ENCODE measurements at regions of chr6 and their contacts with region 1.

Region 1: GRCh38 chr6:3848925-3849605 is at the start of gene FAM50B:
- DNase-seq: peak; percentile 51
- H3K4me3 ChIP-seq: peak within 1 kb of the TSS; percentile 46
- H3K27me3 ChIP-seq: no peaks in the 10 kb centered on the region
- CTCF ChIP-seq: peak; percentile 95
- polyA plus RNA-seq, gene FAM50B: 9.0 and 9.9 TPM in 2 replicates

Region 2: DNA sequence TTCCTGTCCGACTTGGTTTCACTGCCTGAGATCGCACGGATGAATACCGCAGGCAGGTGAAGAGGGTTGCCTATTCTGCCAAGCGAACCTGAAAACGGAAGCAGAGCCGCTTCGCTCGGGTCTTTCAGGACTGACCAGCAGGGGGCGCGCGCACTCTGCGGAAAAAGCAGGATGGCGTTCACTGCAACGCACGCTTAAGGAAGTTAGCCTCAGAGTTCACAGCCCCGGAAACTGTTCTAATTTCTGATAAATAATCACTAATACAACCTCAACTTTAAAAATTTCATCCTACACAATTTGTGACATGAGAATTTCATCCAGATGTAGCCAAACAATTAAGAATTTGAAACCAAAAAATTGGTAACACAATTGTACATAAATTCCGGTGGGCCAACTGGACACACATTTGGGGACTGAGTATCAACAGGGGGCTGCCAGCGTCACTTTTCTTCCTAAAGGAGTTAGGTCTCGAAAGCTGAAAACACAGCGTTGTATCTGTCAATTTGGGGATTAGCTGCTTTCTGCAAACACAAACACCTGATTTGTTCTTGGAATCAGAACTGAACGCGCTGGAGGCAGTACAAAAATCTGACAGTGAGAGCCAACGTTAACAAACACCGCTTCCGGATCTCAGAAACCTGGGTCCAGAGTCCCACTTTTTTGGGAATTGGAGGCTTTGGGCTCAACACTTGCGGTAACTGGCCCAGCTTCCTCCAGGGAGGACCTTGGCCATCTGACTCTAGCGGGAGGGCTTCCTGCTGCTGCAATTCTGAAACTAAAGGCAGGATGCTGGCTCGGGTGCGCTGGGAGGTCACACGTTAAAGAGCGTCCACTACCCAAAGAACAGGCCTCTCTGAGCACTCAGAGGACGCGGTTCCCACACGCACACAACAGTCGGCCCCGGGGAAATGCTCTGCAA is 106.4 kb before region 1 on chr6:
- CTCF ChIA-PET with region 1: interaction called, 40 read pairs
- POLR2A ChIA-PET with region 1: interaction called, 3 read pairs
- DNase-seq: no peak
- H3K4me3 ChIP-seq: no peak overlapping the region
- H3K27me3 ChIP-seq: no peaks in the 10 kb centered on the region
- CTCF ChIP-seq: peak; percentile 90

Region 3: DNA sequence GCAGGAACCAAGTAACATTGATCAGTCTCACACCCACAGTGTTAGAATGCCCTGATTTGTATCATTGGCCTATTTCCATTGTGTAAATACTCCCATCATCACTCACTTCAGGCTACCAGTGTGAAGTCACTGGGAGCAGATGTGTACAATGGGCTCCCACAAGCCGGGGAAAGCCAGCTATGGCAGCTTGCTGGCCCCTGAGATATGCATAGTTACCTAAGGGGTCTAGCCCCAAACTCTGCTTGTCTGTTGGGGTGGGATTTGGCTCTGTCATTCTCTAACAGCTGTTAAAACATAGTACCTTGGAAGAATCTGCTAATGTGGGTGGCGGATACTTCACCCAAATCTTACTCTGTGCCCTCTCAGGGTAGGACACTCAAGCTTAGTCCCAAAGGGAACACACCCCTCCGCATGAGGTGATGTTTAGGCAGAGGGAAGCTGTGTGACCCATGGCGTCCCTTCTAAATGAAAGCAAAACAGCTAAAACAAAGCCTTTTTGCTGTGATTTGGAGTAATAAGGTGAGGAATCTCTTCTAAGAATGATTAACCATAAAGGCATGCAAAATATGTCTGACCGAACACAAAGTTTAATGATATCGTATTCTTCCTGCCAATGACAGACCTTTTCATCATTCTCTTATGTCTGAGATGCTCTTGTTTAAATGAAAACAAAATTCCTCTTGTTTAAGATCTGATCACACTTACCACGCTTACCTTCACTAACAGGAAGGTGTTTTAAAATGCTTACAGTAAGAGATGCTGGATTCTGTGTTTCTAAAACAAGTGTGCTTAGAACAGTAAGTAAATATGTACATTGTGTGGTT is 51.6 kb before region 1 on chr6:
- CTCF ChIA-PET with region 1: interaction called, 13 read pairs
- POLR2A ChIA-PET with region 1: no interaction called
- DNase-seq: peak; percentile 73
- H3K4me3 ChIP-seq: no peak overlapping the region
- H3K27me3 ChIP-seq: no peaks in the 10 kb centered on the region; the same call in 1 of the 2 replicates
- CTCF ChIP-seq: no peak

Region 4: DNA sequence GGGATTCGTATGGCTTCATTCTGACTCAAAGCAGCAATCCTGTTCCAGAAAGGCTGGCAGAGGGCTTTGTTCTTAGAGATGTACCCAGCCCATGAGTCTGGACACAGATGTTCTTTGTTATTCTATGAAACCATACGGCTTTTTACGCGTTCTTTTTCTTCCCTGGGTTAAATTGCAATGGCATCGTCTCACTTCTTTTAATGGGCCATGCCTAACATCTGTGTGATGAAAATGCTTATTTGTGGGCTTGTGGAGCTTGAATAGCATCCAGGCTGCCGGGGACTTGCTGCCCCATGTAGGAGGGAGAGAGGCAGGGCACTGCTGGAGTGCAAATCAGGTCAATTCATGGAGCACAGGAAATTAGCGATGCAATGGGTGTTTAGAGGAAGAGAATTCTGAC is 19.5 kb after region 1 on chr6:
- CTCF ChIA-PET with region 1: interaction called, 12 read pairs
- POLR2A ChIA-PET with region 1: no interaction called
- DNase-seq: no peak
- H3K4me3 ChIP-seq: no peak overlapping the region
- H3K27me3 ChIP-seq: no peaks in the 10 kb centered on the region
- CTCF ChIP-seq: 0 out of 2 replicates have a peak, but pooled peaks have one; percentile 14

Region 5: DNA sequence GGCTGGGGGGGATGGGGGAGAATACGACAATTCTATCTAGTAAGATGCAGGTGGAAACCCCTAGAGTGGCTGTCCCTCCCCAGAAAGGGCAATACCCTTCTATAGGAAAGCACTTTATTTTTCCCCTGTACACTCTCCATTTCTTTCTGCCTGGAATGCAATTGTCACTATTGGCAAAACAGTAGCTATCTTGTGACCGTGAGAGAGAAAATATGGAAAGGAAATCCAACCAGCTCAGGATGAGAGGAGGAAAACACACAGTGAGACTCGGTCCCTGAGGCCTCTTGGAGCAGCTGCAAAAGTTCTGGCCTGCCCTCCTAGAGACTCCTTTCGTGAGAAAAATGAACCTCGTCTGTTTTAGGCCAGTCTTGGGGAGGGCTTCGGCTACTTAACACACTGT is 43.5 kb after region 1 on chr6:
- CTCF ChIA-PET with region 1: interaction called, 39 read pairs
- POLR2A ChIA-PET with region 1: no interaction called
- DNase-seq: no peak
- H3K4me3 ChIP-seq: no peak overlapping the region
- H3K27me3 ChIP-seq: no peaks in the 10 kb centered on the region
- CTCF ChIP-seq: no peak

Region 6: GRCh38 chr6:3929281-3929798 is 80.3 kb after region 1 on chr6:
- CTCF ChIA-PET with region 1: interaction called, 57 read pairs
- POLR2A ChIA-PET with region 1: no interaction called
- DNase-seq: peak; percentile 97
- H3K4me3 ChIP-seq: no peak overlapping the region
- H3K27me3 ChIP-seq: no peaks in the 10 kb centered on the region
- CTCF ChIP-seq: no peak

Region 7: DNA sequence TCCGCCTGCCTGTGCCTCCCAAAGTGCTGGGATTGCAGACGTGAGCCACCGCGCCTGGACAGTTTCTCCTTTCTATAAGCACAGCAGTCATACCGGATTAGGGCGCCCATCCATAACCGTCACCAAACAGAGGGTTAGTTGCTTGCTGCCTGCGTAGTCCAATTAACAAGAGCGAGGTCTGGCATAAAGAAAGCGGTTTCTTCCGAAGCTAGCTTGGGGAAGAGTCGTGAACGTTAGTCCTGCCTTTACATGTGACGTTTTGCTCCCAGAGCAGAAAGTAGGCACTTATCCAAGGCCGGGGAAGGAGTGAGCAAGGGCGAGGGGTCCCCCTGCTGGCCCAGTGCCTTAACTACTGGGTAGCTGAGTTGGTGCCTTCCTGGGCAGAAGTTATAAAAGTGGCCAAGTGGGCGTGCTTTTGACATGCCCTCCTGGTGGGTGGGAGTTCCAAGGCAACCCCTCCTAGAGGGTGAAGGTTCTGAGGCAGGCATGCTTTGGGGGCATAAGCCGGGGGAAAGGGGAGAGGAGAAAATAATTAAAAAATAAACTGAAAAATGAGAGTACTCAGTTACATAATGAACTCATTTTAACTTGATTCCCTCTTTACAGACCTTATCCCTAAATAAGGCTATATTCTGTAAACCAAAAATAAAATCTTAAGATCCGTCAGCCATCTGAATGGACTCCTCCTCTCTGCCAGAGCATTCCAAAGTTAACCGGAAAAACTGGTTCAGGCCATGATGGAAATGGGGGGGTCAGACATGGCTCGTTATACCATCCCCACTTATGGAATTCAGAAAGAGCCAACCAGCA is 141.8 kb after region 1 on chr6:
- CTCF ChIA-PET with region 1: interaction called, 33 read pairs
- POLR2A ChIA-PET with region 1: no interaction called
- DNase-seq: peak; percentile 27
- H3K4me3 ChIP-seq: peak overlapping the region; percentile 9; the same call in 1 of the 2 replicates
- H3K27me3 ChIP-seq: no peaks in the 10 kb centered on the region
- CTCF ChIP-seq: peak; percentile 95